ENCODE measurements at regions of chr1 and their contacts with region 1.

Region 1: GRCh38 chr1:175204330-175204729 is 11.8 kb upstream of the KIAA0040 start:
- DNase-seq: no peak
- ATAC-seq: peak in 2 of 8 donors; percentile 34 to 73
- H3K4me3 ChIP-seq: no peak overlapping the region
- H3K27ac ChIP-seq: peak overlapping the region in 1 of 10 donors; percentile 15
- H3K4me1 ChIP-seq: peaks cover 8 to 47% (median 31%) of the 10 kb centered on the region in 9 donors
- H3K27me3 ChIP-seq: no peaks in the 10 kb centered on the region
- CTCF ChIP-seq: no peak

Region 2: GRCh38 chr1:175267716-175268384 is 63.5 kb after region 1 on chr1:
- intact Hi-C with region 1: loop called in 1 of 10 experiments (anchors 5 kb)
- DNase-seq: peak; percentile 50 to 83
- ATAC-seq: peak; percentile 86 to 94 (median 92)
- H3K4me3 ChIP-seq: no peak overlapping the region
- H3K27ac ChIP-seq: peak overlapping the region; percentile 30 to 77 (median 57)
- H3K4me1 ChIP-seq: peaks cover 0 to 28% (median 4%) of the 10 kb centered on the region in 9 donors
- H3K27me3 ChIP-seq: no peaks in the 10 kb centered on the region
- CTCF ChIP-seq: no peak

Region 3: DNA sequence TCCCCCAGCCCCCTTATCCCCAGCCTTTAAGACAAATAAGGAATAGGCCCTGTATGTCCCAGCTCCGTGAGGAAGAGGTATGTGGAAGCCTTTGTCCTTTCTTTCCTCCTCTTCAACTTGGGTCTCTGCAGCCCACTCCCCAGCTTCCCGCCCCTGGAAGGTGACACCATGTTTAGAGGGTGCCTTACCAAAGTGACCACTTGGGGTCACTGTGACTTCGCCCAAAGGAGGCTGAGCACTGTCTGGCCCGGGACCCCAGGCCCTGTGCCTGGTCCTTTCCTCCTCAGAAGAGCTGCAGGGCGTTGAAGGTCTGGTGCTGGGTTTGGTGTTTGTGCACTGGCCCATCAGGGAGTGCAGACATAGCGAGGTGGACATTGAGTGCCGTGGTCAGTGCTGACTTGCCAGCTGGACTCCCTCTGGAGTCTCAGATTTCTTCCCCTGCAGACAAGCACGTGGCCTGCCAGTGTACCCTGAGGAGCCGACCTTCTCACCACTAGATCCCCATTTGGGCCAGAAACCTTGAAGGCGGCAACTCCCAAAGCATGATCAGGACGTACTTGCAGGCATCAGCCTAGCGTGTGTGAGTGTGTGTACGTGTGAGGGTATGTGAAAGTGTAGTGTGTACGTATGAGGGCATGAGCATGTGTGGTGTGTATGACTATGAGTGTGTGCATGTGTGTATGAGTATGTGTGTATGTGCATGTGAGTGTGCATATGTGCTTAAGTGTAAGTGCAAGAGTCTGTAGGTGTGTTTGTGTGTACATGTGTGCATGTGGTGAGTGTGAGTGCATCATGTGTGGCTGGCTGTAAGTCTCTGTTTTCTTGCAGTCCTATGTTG is 169.7 kb after region 1 on chr1:
- intact Hi-C with region 1: no loop called
- DNase-seq: no peak
- ATAC-seq: peak in 6 of 8 donors; percentile 52 to 75 (median 62)
- H3K4me3 ChIP-seq: no peak overlapping the region
- H3K27ac ChIP-seq: no peak overlapping the region
- H3K4me1 ChIP-seq: peaks cover 0 to 4% (median 0%) of the 10 kb centered on the region in 9 donors
- H3K27me3 ChIP-seq: peaks cover 0 to 13% (median 0%) of the 10 kb centered on the region in 7 donors
- CTCF ChIP-seq: peak; percentile 46 to 77 (median 69)